T-cell (primary cell): ENCODE measurements at regions of chr6 and their contacts with region 1.

Region 1: GRCh38 chr6:37018198-37019064 is 13.0 kb downstream of the FGD2 start:
- DNase-seq: peak; percentile 76 to 91 (median 86)
- ATAC-seq: peak; percentile 88 to 91 (median 90)
- H3K4me3 ChIP-seq: no peak overlapping the region
- H3K4me3 Mint-ChIP-seq: peak overlapping the region in 1 of 3 donors; percentile 3
- H3K27ac ChIP-seq: peak overlapping the region; percentile 31
- H3K27ac Mint-ChIP-seq: peak overlapping the region; percentile 73 to 78
- H3K4me1 ChIP-seq: peaks cover 7 to 46% of the 10 kb centered on the region in 2 experiments
- H3K4me1 Mint-ChIP-seq: peaks cover 44 to 50% (median 48%) of the 10 kb centered on the region in 3 donors
- H3K27me3 ChIP-seq: no peaks in the 10 kb centered on the region
- H3K27me3 Mint-ChIP-seq: no peaks in the 10 kb centered on the region

Region 2: DNA sequence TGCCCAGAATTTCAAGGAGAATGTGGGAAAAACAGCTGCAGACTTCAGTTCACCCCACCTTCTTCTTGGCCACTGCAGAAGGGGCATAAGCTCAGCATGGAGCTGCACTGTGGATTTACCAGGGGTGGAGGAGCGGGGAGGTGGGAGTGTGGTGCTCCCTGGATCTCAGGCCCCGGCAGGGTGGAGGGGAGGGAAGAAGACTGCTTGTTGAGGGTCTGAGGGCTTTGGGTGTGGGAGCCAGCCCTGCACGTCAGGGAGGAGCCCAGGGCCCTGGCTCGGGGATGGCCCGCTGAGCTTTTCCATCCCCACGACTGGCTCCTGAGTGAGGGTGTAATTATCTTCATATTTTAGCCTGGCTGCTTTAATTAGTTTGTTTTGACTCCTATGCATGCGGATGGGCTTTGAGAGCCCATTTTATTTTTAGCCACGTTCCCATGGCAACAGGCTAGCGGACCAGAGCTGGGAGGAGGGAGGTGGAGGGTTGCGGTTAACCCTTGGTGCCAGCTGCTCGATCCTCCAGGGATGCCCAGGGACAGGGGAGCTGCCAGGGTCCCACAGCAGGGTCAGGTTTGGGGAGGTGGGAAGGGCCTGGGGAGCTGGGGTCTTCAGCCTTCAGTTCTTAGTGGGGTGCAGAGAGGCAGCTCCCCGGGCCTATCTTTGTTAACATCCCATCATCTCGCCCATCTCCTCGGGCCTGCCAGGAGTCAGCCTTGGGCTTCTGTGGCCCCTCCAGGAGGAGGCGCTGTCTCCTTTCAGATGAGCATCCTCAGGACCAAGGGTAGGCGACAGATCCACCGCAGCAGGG is 252.6 kb before region 1 on chr6:
- CTCF ChIA-PET with region 1: interaction called, 11 to 15 read pairs
- POLR2A ChIA-PET with region 1: no interaction called
- DNase-seq: peak; percentile 55 to 88 (median 76)
- ATAC-seq: peak; percentile 76 to 94 (median 76)
- H3K4me3 ChIP-seq: no peak overlapping the region
- H3K4me3 Mint-ChIP-seq: no peak overlapping the region
- H3K27ac ChIP-seq: no peak overlapping the region
- H3K27ac Mint-ChIP-seq: peak overlapping the region in 1 of 2 donors; percentile 31
- H3K4me1 ChIP-seq: peaks cover 18 to 46% of the 10 kb centered on the region in 2 experiments
- H3K4me1 Mint-ChIP-seq: peaks cover 32 to 42% (median 37%) of the 10 kb centered on the region in 3 donors
- H3K27me3 ChIP-seq: no peaks in the 10 kb centered on the region
- H3K27me3 Mint-ChIP-seq: no peaks in the 10 kb centered on the region

Region 3: DNA sequence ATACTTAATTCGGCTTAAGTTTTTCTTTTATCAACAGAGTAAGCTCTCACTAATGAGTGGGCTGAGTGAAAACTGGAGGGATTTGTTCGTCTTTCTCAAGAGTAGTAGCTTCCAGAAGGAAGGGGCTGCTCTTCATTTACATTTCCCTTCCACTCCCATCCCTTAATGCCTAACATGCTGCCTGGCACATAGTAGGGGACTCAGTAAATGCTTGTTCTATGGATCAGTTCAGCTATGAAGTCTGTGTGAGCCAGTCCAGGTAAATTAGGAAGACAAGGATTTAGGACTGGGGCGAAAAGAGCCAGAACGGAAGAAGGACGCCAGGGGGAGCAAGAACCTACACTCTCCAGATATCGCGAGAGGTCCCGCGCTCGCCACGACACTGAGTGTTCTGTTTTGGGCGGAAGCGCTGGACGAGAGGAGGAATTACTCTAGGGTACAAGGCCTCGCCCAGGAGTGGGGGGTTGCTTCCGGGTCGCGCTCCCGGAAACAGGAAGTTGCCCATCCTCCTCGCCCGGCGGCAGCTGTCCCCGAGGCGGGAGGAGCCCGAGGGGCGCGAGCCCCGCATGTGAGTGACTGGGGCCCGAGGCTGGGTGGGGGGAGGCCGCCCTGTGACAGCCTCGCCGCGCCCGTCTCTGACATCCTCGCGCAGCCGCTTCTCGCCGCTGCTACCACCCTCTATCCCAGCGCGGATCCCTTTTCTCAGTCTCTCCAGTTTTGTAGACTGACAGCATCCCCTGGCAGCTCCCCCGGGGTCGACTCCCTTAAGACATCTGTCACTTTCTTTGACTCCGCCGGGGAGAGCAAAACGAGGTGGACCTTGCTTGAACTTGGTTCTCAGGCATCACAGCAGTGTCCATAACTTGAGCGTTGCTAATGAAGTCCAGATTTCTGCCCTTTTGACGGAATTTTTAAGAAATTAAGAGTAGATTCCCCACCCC is 132.7 kb before region 1 on chr6 and contains the start of gene C6orf89:
- CTCF ChIA-PET with region 1: interaction called, 5 to 81 read pairs
- POLR2A ChIA-PET with region 1: interaction called in 1 of 2 experiments, 3 read pairs
- DNase-seq: peak; percentile 91 to 99 (median 97)
- ATAC-seq: peak; percentile 98 to 100 (median 99)
- H3K4me3 ChIP-seq: peak within 1 kb of the TSS; percentile 77 to 85
- H3K4me3 Mint-ChIP-seq: peak within 1 kb of the TSS; percentile 86 to 87 (median 87)
- H3K27ac ChIP-seq: peak within 1 kb of the TSS; percentile 94
- H3K27ac Mint-ChIP-seq: peak within 1 kb of the TSS; percentile 97 to 98
- H3K4me1 ChIP-seq: peaks cover 11 to 15% of the 10 kb centered on the region in 2 experiments
- H3K4me1 Mint-ChIP-seq: peaks cover 35 to 48% (median 48%) of the 10 kb centered on the region in 3 donors
- H3K27me3 ChIP-seq: no peaks in the 10 kb centered on the region
- H3K27me3 Mint-ChIP-seq: no peaks in the 10 kb centered on the region
- total RNA-seq, gene C6orf89: 32.6 to 57.9 (median 46.1) TPM

Region 4: DNA sequence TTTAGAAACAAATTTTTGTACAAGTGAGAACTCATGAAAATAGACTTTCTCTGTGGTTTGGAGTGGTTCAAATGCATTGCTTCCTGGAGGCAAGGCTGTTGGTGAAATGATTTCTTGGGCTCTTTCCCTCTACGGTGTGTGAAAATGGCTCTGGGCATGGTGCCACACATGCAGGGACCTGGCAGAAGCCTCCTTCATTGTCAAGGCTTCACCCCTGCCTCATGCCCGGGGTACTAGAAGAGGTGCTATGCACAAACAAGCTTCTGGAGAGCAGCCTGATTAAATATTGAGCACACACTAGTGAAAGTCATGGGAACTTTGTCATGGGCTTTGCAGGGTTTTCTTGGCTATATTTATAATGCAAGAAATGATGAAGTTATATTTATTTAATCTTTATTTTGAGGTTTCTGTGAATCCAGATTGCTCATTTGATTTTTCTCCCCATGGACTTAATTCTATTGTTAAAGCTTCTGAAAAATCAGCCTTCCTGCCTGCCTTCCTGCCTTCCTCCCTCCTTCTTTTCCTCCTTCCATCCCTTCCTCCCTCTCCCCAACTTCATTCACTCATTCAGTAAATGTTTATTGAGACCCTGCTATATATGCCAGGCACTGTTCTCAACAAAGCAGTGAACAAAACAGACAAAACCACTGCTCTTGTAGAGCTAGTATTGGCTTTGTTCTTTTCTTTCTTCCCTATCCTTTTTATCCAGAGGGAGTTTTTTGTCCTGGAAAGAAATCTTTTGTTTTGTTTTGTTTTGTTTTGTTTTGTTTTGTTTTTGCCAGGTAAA is 111.7 kb before region 1 on chr6:
- CTCF ChIA-PET with region 1: no interaction called
- POLR2A ChIA-PET with region 1: no interaction called
- DNase-seq: no peak
- ATAC-seq: no peak
- H3K4me3 ChIP-seq: no peak overlapping the region
- H3K4me3 Mint-ChIP-seq: no peak overlapping the region
- H3K27ac ChIP-seq: no peak overlapping the region
- H3K27ac Mint-ChIP-seq: peak overlapping the region; percentile 30 to 74
- H3K4me1 ChIP-seq: peaks cover 7% of the 10 kb centered on the region in 2 experiments
- H3K4me1 Mint-ChIP-seq: peaks cover 3 to 30% (median 12%) of the 10 kb centered on the region in 3 donors
- H3K27me3 ChIP-seq: no peaks in the 10 kb centered on the region
- H3K27me3 Mint-ChIP-seq: no peaks in the 10 kb centered on the region

Region 5: GRCh38 chr6:36979347-36979742 is 39.1 kb before region 1 on chr6:
- CTCF ChIA-PET with region 1: interaction called, 3 to 10 read pairs
- POLR2A ChIA-PET with region 1: no interaction called
- DNase-seq: peak in 27 of 35 experiments; percentile 16 to 63 (median 37)
- ATAC-seq: peak; percentile 64 to 77 (median 74)
- H3K4me3 ChIP-seq: no peak overlapping the region
- H3K4me3 Mint-ChIP-seq: no peak overlapping the region
- H3K27ac ChIP-seq: no peak overlapping the region
- H3K27ac Mint-ChIP-seq: peak overlapping the region; percentile 23 to 73
- H3K4me1 ChIP-seq: peaks cover 11 to 37% of the 10 kb centered on the region in 2 experiments
- H3K4me1 Mint-ChIP-seq: peaks cover 33 to 36% (median 35%) of the 10 kb centered on the region in 3 donors
- H3K27me3 ChIP-seq: no peaks in the 10 kb centered on the region
- H3K27me3 Mint-ChIP-seq: no peaks in the 10 kb centered on the region

Region 6: GRCh38 chr6:37005061-37005810 is 13.2 kb before region 1 on chr6 and contains the start of gene FGD2:
- CTCF ChIA-PET with region 1: interaction called, 6 to 13 read pairs
- POLR2A ChIA-PET with region 1: no interaction called
- DNase-seq: peak in 1 of 35 experiments; percentile 39
- ATAC-seq: no peak
- H3K4me3 ChIP-seq: peak within 1 kb of the TSS in 1 of 2 donors; percentile 27
- H3K4me3 Mint-ChIP-seq: peak within 1 kb of the TSS; percentile 34 to 76 (median 49)
- H3K27ac ChIP-seq: peak within 1 kb of the TSS; percentile 34
- H3K27ac Mint-ChIP-seq: peak within 1 kb of the TSS; percentile 73 to 81
- H3K4me1 ChIP-seq: peaks cover 0 to 32% of the 10 kb centered on the region in 2 experiments
- H3K4me1 Mint-ChIP-seq: peaks cover 13 to 29% (median 21%) of the 10 kb centered on the region in 3 donors
- H3K27me3 ChIP-seq: peaks cover 0 to 3% of the 10 kb centered on the region in 2 experiments
- H3K27me3 Mint-ChIP-seq: no peaks in the 10 kb centered on the region
- total RNA-seq, gene FGD2: 2.8 to 11.1 (median 3.3) TPM

Region 7: DNA sequence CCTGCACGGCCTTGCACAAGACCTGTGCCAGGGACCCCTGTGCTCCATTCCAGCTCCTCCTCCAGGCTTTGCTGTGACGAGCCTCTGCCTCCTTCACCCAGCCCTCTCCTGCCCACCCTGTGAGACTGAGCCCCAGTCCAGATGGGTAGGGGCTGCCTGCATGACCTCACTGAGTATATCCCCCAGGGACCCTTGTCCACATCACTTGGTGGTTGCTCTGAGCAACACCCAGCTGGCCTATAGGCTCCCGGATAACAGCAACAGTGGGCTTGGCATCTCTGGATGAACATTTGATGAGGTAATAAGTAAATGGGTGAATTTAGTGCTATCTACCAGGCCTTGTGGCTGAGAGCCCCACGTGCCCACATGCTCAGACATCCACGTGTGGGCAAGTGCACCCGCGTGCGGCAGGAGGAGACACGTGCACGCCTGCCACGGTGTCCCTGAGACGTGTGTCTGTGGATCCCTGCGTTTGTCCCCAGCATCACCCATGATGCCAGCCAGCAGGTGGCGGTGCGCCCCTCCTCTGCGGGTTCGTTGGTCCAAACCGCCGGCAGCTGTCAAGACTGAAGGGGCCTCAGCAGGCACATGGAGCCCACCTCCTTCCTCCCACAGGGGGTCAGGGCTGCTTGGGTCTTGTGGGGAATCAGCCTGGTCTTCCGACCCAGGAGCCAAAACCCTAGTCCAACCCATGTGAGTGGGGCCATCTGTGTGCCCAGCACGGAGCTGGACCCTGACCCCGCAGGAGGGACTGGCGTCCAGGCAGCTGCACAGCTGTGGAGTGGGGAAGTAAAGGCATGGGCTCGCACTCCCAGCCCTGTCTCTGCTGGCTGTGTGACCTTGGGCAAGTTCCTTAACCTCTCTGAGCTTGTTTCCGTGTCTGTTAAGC is 33.0 kb after region 1 on chr6:
- CTCF ChIA-PET with region 1: interaction called, 4 to 12 read pairs
- POLR2A ChIA-PET with region 1: no interaction called
- DNase-seq: peak; percentile 76 to 93 (median 86)
- ATAC-seq: peak; percentile 53 to 79 (median 62)
- H3K4me3 ChIP-seq: no peak overlapping the region
- H3K4me3 Mint-ChIP-seq: peak overlapping the region; percentile 31 to 72 (median 49)
- H3K27ac ChIP-seq: peak overlapping the region; percentile 93
- H3K27ac Mint-ChIP-seq: peak overlapping the region; percentile 87 to 95
- H3K4me1 ChIP-seq: peaks cover 44 to 60% of the 10 kb centered on the region in 2 experiments
- H3K4me1 Mint-ChIP-seq: peaks cover 58 to 66% (median 62%) of the 10 kb centered on the region in 3 donors
- H3K27me3 ChIP-seq: no peaks in the 10 kb centered on the region
- H3K27me3 Mint-ChIP-seq: no peaks in the 10 kb centered on the region

Region 8: GRCh38 chr6:37207903-37208456 is 189.5 kb after region 1 on chr6:
- CTCF ChIA-PET with region 1: interaction called, 48 to 103 read pairs
- POLR2A ChIA-PET with region 1: interaction called in 1 of 2 experiments, 4 read pairs
- DNase-seq: peak; percentile 72 to 91 (median 85)
- ATAC-seq: peak; percentile 61 to 81 (median 74)
- H3K4me3 ChIP-seq: no peak overlapping the region
- H3K4me3 Mint-ChIP-seq: peak overlapping the region in 2 of 3 donors; percentile 6 to 60
- H3K27ac ChIP-seq: peak overlapping the region; percentile 32
- H3K27ac Mint-ChIP-seq: peak overlapping the region; percentile 91 to 92
- H3K4me1 ChIP-seq: peaks cover 20 to 54% of the 10 kb centered on the region in 2 experiments
- H3K4me1 Mint-ChIP-seq: peaks cover 59 to 65% (median 64%) of the 10 kb centered on the region in 3 donors
- H3K27me3 ChIP-seq: no peaks in the 10 kb centered on the region
- H3K27me3 Mint-ChIP-seq: no peaks in the 10 kb centered on the region